ENCODE measurements at regions of chr22 and their contacts with region 1.

Region 1: DNA sequence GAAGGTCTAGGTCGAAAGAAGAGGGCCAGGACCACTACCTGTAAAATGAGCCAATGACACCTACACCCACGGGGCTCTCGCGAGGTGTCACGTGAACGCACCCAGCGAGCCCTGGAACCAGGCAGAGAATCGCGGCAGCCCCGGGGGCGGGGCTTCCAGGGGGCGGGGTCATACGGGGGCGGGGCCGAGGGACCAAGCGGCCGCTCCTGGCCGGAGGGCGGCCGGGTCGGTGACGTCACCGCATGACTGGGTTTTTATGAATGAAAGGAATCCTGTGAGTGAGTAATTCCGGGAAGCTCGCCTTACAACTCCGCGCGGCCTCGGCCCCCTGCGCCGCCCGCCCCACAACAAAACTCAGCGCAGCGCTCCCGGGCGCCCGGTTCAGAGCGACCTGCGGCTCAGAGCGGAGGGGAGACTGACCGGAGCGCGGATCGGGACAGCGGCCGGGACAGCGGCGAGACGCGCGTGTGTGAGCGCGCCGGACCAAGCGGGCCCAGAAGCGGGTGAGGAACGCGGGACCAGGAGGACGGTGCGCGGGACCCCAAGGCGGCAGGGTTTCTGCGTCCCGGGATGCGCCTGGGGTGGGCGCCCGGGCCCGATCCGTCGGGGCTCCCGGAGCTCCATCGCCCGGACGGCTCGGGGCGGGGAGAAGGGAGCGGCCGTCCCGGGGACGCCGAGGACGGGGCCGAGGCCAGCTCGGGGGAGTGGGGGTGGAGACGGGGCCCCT is at the start of gene MAFF:
- DNase-seq: peak; percentile 95 to 97
- ATAC-seq: peak; percentile 78 to 85
- H3K4me3 ChIP-seq: peak within 1 kb of the TSS; percentile 69 to 91 (median 80)
- H3K27ac ChIP-seq: peak within 1 kb of the TSS; percentile 95 to 100 (median 96)
- H3K4me1 ChIP-seq: peaks cover 15 to 25% of the 10 kb centered on the region in 2 donors
- H3K27me3 ChIP-seq: no peaks in the 10 kb centered on the region
- CTCF ChIP-seq: no peak
- POLR2A ChIP-seq: peak; percentile 96 to 98
- total RNA-seq, gene MAFF: 19.3 to 448 (median 33.4) TPM

Region 2: DNA sequence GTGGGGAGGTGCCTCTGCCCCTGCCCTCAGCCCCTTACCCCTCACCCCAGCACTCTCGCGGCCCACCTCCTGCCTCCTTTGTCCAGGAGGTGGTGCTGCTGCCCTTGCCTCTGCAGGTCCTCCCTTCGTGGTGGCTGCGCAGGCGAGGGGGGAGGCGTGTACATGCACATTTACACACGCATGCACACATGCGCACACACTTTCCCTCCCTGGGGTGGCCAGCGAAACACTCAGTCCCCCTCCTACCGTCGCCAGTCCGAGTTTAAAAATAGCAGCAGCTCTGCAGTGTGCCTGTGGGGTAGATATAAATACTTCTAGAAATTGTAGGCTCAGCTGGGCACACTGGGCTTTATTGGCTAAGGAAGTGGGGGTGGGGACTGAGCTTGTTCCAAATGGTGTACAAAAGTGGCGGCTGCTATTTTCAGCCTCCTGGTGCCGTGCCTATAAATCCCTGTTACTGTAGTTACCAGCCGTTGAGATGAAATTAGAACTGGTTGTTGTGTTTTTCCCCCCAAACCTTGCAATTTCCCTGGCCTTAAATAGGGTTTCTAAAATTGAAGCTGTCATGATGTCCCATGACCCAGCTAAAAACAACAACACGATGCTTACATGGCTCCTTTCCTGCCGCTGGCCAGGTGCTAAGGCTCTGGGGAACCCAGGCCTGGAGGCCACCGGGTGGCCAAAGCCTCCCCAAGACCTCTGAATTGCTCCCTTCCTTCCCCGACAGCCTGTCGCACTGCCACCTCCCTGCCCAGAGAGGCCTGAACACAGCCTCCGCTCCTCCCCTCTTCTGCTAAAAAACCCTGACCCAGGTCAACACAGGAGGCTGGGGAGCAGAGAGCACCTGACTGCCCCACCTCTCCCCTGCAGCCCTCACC is 132.3 kb before region 1 on chr22:
- in situ Hi-C with region 1: no loop called
- intact Hi-C with region 1: loop called (anchors 1 kb)
- DNase-seq: peak; percentile 85 to 97
- ATAC-seq: peak; percentile 72 to 74
- H3K4me3 ChIP-seq: peak overlapping the region; percentile 42 to 57 (median 48)
- H3K27ac ChIP-seq: peak overlapping the region; percentile 97 to 100 (median 98)
- H3K4me1 ChIP-seq: peaks cover 51 to 69% of the 10 kb centered on the region in 2 donors
- H3K27me3 ChIP-seq: no peaks in the 10 kb centered on the region
- CTCF ChIP-seq: peak in 4 of 5 experiments; percentile 72 to 82 (median 77)
- POLR2A ChIP-seq: peak; percentile 58 to 65

Region 3: GRCh38 chr22:38114484-38115398 is 87.1 kb before region 1 on chr22:
- in situ Hi-C with region 1: no loop called
- intact Hi-C with region 1: loop called (anchors 10 kb)
- DNase-seq: peak; percentile 61 to 78
- ATAC-seq: peak; percentile 83 to 90
- H3K4me3 ChIP-seq: no peak overlapping the region
- H3K27ac ChIP-seq: no peak overlapping the region
- H3K4me1 ChIP-seq: peaks cover 2 to 7% of the 10 kb centered on the region in 2 donors
- H3K27me3 ChIP-seq: no peaks in the 10 kb centered on the region
- CTCF ChIP-seq: peak; percentile 75 to 96 (median 91)
- POLR2A ChIP-seq: no peak

Region 4: DNA sequence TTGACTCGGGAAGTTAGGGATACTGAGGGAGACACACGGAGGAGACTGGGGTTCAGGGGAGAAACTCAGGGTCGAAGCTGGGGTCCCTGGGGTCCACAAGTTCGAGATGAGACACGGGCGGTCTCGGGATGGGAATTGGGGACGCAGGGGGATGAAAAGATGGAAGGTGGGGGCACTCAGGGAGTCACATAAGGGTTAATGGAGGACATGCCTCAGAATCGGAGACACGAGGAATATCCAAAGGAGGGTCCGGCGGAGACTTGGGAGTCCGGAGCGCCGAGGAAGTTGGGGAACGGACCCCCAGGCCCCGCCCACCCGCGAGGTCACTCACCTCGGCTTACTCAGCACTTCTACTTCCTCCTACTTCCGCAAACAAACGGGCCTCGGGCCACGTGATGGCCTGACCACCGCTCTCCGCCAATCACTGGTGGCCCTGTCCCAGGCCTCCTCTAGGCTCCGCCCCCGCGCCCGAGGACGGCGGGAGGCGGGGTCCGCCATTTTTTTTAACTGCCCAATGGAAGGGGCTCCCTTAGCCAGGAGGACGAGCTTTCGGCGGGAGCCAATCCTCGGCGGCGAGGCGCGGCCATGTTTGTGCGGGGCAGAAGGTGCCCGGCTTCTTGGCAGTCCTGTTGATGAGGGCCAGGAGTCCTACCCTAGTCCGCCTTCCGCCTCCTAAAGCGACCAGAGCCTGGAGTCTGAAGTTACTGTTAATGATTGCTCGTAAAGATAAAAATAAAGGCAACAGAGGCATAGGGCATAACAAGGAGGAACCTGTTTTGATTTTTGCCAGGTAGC is 20.2 kb before region 1 on chr22 and contains the start of gene PLA2G6:
- in situ Hi-C with region 1: no loop called
- intact Hi-C with region 1: loop called (anchors 1 kb)
- DNase-seq: peak; percentile 99
- ATAC-seq: peak; percentile 58 to 69
- H3K4me3 ChIP-seq: peak within 1 kb of the TSS; percentile 66 to 71 (median 67)
- H3K27ac ChIP-seq: peak within 1 kb of the TSS; percentile 93 to 97 (median 96)
- H3K4me1 ChIP-seq: peaks cover 47 to 49% of the 10 kb centered on the region in 2 donors
- H3K27me3 ChIP-seq: no peaks in the 10 kb centered on the region
- CTCF ChIP-seq: no peak
- POLR2A ChIP-seq: peak; percentile 36 to 77
- total RNA-seq, gene PLA2G6: 9.1 to 19.5 (median 12.1) TPM

Region 5: GRCh38 chr22:38272373-38273134 is 70.7 kb after region 1 on chr22 and contains the start of gene TMEM184B:
- in situ Hi-C with region 1: no loop called
- intact Hi-C with region 1: loop called (anchors 5 kb)
- DNase-seq: peak; percentile 33 to 72
- ATAC-seq: peak; percentile 91 to 94
- H3K4me3 ChIP-seq: peak within 1 kb of the TSS; percentile 75 to 99 (median 86)
- H3K27ac ChIP-seq: peak within 1 kb of the TSS; percentile 91 to 96 (median 96)
- H3K4me1 ChIP-seq: peaks cover 57 to 59% of the 10 kb centered on the region in 2 donors
- H3K27me3 ChIP-seq: no peaks in the 10 kb centered on the region
- CTCF ChIP-seq: no peak
- POLR2A ChIP-seq: peak; percentile 98 to 99
- total RNA-seq, gene TMEM184B: 25.4 to 40.7 (median 31.2) TPM

Region 6: GRCh38 chr22:38317122-38317994 is 115.5 kb after region 1 on chr22 and contains the start of gene CSNK1E:
- in situ Hi-C with region 1: no loop called
- intact Hi-C with region 1: loop called (anchors 5 kb)
- DNase-seq: peak; percentile 62 to 79
- ATAC-seq: peak; percentile 58 to 67
- H3K4me3 ChIP-seq: peak within 1 kb of the TSS; percentile 64 to 88 (median 78)
- H3K27ac ChIP-seq: peak within 1 kb of the TSS; percentile 95 to 100 (median 98)
- H3K4me1 ChIP-seq: peaks cover 38 to 46% of the 10 kb centered on the region in 2 donors
- H3K27me3 ChIP-seq: no peaks in the 10 kb centered on the region
- CTCF ChIP-seq: no peak
- POLR2A ChIP-seq: peak; percentile 28 to 60
- total RNA-seq, gene CSNK1E: 29.8 to 66.3 (median 40.3) TPM